Caco-2 (cell line): ENCODE measurements at regions of chr3 and their contacts with region 1.

Region 1: GRCh38 chr3:32947789-32948238 is 3.6 kb upstream of the CCR4 start:
- DNase-seq: peak; percentile 82 to 85
- H3K4me3 ChIP-seq: no peak overlapping the region
- H3K4me3 Mint-ChIP-seq: no peak overlapping the region
- H3K27ac Mint-ChIP-seq: no peak overlapping the region
- H3K4me1 ChIP-seq: no peaks in the 10 kb centered on the region
- H3K4me1 Mint-ChIP-seq: peaks cover 10% of the 10 kb centered on the region
- H3K27me3 ChIP-seq: no peaks in the 10 kb centered on the region; the same call in 1 of the 2 replicates
- H3K27me3 Mint-ChIP-seq: no peaks in the 10 kb centered on the region
- CTCF ChIP-seq: peak; percentile 54 to 82

Region 2: DNA sequence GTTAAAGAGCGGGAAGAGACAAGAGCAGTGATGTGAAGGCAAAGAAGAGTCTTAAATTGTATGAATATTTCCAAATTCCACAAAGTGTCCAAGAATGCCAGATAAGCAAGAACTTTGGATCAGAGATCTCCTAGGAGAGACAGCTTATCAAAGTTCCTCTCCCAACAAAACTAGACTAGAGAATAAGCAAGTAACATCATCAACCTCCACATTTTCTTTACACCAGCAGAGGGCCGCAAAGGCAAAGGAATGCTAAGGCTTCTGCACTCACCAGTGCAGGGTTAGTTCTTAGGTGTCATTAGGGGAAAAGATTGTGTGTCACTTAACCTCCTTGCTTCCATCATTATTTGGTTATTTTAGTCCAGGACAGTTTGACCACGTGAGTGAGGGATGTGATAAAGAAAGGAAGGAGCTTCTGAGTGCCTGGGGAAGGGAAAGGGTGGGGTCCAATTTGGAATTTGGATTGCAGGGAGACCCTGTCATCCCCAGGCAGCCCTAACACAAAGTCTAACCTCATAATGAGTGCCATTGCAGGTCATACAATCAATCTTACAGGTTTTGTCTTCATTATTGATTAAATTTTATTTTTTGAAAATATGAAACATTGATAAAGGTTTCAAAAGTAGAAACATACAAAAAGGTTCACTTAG is 437.6 kb before region 1 on chr3:
- CTCF ChIA-PET with region 1: no interaction called
- POLR2A ChIA-PET with region 1: no interaction called
- intact Hi-C with region 1: no loop called
- DNase-seq: peak; percentile 71 to 77
- H3K4me3 ChIP-seq: no peak overlapping the region
- H3K4me3 Mint-ChIP-seq: no peak overlapping the region
- H3K27ac Mint-ChIP-seq: no peak overlapping the region
- H3K4me1 ChIP-seq: no peaks in the 10 kb centered on the region
- H3K4me1 Mint-ChIP-seq: no peaks in the 10 kb centered on the region
- H3K27me3 ChIP-seq: no peaks in the 10 kb centered on the region
- H3K27me3 Mint-ChIP-seq: no peaks in the 10 kb centered on the region
- CTCF ChIP-seq: peak; percentile 63 to 77

Region 3: GRCh38 chr3:32934150-32934742 is 13.6 kb before region 1 on chr3:
- CTCF ChIA-PET with region 1: no interaction called
- POLR2A ChIA-PET with region 1: no interaction called
- intact Hi-C with region 1: no loop called
- DNase-seq: peak in 1 of 2 experiments; percentile 42
- H3K4me3 ChIP-seq: no peak overlapping the region
- H3K4me3 Mint-ChIP-seq: no peak overlapping the region
- H3K27ac Mint-ChIP-seq: no peak overlapping the region
- H3K4me1 ChIP-seq: no peaks in the 10 kb centered on the region
- H3K4me1 Mint-ChIP-seq: peaks cover 8% of the 10 kb centered on the region
- H3K27me3 ChIP-seq: no peaks in the 10 kb centered on the region
- H3K27me3 Mint-ChIP-seq: no peaks in the 10 kb centered on the region
- CTCF ChIP-seq: peak; percentile 71 to 80

Region 4: DNA sequence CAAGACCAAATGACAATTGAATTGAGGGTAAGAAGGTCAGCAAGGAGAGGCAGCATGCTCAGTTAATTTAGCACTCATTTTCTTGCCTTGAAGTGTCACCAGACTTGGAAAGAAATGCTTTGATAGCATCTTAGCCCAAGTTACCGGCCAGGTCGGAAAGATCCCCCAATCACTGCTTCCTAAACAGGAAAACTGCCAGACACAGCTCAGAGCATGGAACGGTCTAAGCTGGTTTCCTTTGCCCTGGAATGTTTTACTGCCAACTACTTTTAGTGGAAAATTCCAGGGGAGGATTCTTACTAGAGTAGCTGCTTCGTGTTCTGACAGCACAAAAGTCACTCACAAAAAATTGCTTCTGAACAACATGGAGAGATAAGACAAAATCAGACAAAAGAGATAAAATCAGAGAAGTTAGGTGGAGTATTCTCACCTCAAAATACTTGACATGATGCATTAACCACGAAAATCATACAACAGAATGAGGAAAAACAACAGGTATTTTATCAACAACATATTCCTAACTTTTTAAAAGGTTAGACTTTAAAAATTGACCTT is 69.1 kb after region 1 on chr3:
- CTCF ChIA-PET with region 1: no interaction called
- POLR2A ChIA-PET with region 1: no interaction called
- intact Hi-C with region 1: loop called (anchors 5 kb)
- DNase-seq: no peak
- H3K4me3 ChIP-seq: no peak overlapping the region
- H3K4me3 Mint-ChIP-seq: no peak overlapping the region
- H3K27ac Mint-ChIP-seq: no peak overlapping the region
- H3K4me1 ChIP-seq: no peaks in the 10 kb centered on the region
- H3K4me1 Mint-ChIP-seq: peaks cover 7% of the 10 kb centered on the region
- H3K27me3 ChIP-seq: no peaks in the 10 kb centered on the region
- H3K27me3 Mint-ChIP-seq: no peaks in the 10 kb centered on the region
- CTCF ChIP-seq: no peak